ENCODE measurements at regions of chr12 and their contacts with region 1.

Region 1: DNA sequence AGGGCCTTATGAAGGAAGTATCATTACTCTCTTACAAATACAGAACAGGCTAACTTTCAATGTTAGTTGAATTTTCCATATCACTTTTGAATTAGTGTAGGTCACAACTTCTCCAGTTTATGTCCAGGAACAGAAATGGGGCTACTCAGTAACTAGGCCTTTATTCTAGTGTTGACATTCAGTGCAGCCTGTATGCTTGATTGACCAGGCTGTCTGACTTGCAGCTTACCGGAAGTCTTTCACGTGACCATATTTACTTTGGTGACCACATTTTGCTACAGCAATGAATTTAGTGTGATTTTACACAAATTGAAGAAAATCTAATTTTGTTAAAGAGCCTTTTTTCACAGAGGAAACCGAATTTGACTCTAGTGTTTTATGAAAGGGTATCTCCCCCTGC is 12.4 kb downstream of the MTERF2 start:
- DNase-seq: no peak
- ATAC-seq: no peak
- H3K4me3 ChIP-seq: no peak overlapping the region
- H3K4me3 Mint-ChIP-seq: no peak overlapping the region
- H3K27ac ChIP-seq: no peak overlapping the region
- H3K27ac Mint-ChIP-seq: no peak overlapping the region
- H3K4me1 ChIP-seq: no peaks in the 10 kb centered on the region
- H3K4me1 Mint-ChIP-seq: peaks cover 8 to 19% (median 16%) of the 10 kb centered on the region in 3 donors
- H3K27me3 ChIP-seq: no peaks in the 10 kb centered on the region
- H3K27me3 Mint-ChIP-seq: no peaks in the 10 kb centered on the region

Region 2: DNA sequence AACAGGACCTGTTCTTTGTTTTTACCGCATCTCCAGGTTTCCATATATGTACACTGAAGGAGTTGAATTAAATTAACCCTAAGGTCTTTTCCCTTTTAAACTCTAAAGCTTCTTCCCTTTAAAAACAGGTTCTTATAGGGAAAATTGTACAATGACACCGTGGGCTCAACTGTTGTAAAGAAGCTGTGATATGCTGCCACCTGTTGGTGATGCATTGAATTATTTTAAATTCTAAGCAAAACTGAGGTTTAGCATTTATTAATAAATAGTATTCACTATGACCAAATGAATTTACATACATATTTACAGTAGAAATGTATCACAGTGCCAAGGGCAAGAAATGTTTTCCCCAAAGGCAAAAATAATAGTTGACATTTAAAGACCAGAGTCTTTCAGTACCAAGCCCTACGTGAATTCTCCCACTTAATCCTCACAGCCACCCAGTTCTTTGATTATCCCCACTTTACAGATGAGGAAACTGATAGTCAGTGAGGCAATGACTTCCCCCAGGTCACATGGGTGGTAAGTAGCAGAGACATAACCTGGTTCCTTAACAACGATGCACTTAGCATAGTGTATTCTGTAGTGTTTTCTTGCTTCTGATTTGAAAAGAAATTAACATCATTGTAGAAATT is 54.5 kb before region 1 on chr12:
- CTCF ChIA-PET with region 1: no interaction called
- POLR2A ChIA-PET with region 1: no interaction called
- DNase-seq: peak in 6 of 35 experiments; percentile 4 to 71 (median 11)
- ATAC-seq: no peak
- H3K4me3 ChIP-seq: no peak overlapping the region
- H3K4me3 Mint-ChIP-seq: no peak overlapping the region
- H3K27ac ChIP-seq: no peak overlapping the region
- H3K27ac Mint-ChIP-seq: peak overlapping the region in 1 of 2 donors; percentile 34
- H3K4me1 ChIP-seq: peaks cover 0 to 7% of the 10 kb centered on the region in 2 experiments
- H3K4me1 Mint-ChIP-seq: peaks cover 10 to 15% (median 11%) of the 10 kb centered on the region in 3 donors
- H3K27me3 ChIP-seq: peaks cover 0 to 2% of the 10 kb centered on the region in 2 experiments
- H3K27me3 Mint-ChIP-seq: peaks cover 7 to 20% of the 10 kb centered on the region in 2 donors

Region 3: GRCh38 chr12:106986135-106986534 is 11.6 kb after region 1 on chr12:
- CTCF ChIA-PET with region 1: interaction called in 1 of 2 experiments, 3 read pairs
- POLR2A ChIA-PET with region 1: interaction called in 1 of 2 experiments, 10 read pairs
- DNase-seq: no peak
- ATAC-seq: no peak
- H3K4me3 ChIP-seq: peak overlapping the region; percentile 91 to 93
- H3K4me3 Mint-ChIP-seq: peak overlapping the region; percentile 92 to 96 (median 95)
- H3K27ac ChIP-seq: no peak overlapping the region
- H3K27ac Mint-ChIP-seq: peak overlapping the region; percentile 77 to 82
- H3K4me1 ChIP-seq: peaks cover 3 to 17% of the 10 kb centered on the region in 2 experiments
- H3K4me1 Mint-ChIP-seq: peaks cover 40 to 49% (median 45%) of the 10 kb centered on the region in 3 donors
- H3K27me3 ChIP-seq: no peaks in the 10 kb centered on the region
- H3K27me3 Mint-ChIP-seq: no peaks in the 10 kb centered on the region

Region 4: GRCh38 chr12:107411792-107412535 is 437.5 kb after region 1 on chr12:
- CTCF ChIA-PET with region 1: no interaction called
- POLR2A ChIA-PET with region 1: interaction called in 1 of 2 experiments, 10 read pairs
- DNase-seq: no peak
- ATAC-seq: no peak
- H3K4me3 ChIP-seq: no peak overlapping the region
- H3K4me3 Mint-ChIP-seq: no peak overlapping the region
- H3K27ac ChIP-seq: no peak overlapping the region
- H3K27ac Mint-ChIP-seq: no peak overlapping the region
- H3K4me1 ChIP-seq: no peaks in the 10 kb centered on the region
- H3K4me1 Mint-ChIP-seq: peaks cover 0 to 4% (median 0%) of the 10 kb centered on the region in 3 donors
- H3K27me3 ChIP-seq: no peaks in the 10 kb centered on the region
- H3K27me3 Mint-ChIP-seq: no peaks in the 10 kb centered on the region